Activated naive CD4-positive, alpha-beta T cell treated with anti-CD3 and anti-CD28 coated beads for 36 hours (primary cell): ENCODE measurements at regions of chr6 and their contacts with region 1.

Region 1: GRCh38 chr6:118187568-118188164 is 280.6 kb downstream of the SLC35F1 start:
- DNase-seq: peak; percentile 53
- H3K4me3 Mint-ChIP-seq: peak overlapping the region; percentile 5
- H3K27ac Mint-ChIP-seq: peak overlapping the region; percentile 82
- H3K4me1 Mint-ChIP-seq: peaks cover 32% of the 10 kb centered on the region
- H3K27me3 Mint-ChIP-seq: no peaks in the 10 kb centered on the region

Region 2: DNA sequence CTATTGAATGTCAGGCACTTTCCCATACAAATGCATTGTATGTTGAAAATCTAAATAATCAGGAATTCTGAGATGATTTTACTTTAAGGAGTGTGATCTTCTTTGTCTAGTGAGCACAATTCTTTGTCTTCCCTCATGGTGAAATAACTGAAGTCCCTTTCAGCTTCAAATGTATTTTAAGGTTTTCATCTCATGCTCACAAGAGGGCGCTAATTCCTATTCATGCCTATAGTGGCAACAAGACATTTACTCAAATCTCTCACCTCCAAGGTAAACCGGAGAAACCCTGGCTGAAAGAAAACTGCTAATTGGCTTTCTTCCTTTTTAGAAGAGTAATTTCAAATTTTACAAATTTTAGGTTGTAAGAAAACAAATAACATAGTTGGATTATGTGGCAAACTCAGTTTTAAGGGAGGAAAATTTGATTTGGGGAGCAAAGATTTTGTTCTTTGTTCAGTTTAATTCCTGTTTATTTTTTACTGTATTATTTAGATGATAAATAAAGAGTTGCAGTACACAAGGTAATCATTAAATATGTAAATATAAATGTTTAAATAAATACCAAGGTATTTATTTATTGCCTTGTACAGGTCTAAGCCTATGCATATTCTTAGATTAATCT is 211.5 kb before region 1 on chr6:
- CTCF ChIA-PET with region 1: no interaction called
- intact Hi-C with region 1: loop called (anchors 5 kb)
- DNase-seq: peak; percentile 17
- H3K4me3 Mint-ChIP-seq: no peak overlapping the region
- H3K27ac Mint-ChIP-seq: no peak overlapping the region
- H3K4me1 Mint-ChIP-seq: no peaks in the 10 kb centered on the region
- H3K27me3 Mint-ChIP-seq: peaks cover 8% of the 10 kb centered on the region

Region 3: DNA sequence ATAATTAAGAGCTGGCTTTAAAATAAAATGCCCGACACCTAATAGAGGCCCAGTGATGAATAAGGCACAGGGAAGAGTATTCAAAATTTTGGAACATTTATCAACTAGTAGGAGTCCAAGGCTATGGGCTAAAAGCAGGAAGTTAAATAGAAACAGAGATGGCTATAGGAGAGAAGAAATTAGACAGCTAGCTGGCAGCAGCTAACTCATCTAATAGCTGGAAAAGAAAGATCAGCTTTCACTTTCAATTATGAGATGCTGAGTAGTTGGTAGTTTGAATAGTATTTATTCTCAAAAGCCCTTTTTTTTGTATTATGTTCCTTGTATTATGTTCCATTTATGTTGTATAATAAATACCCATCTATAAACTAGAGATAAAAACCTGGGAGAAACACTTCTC is 64.9 kb before region 1 on chr6:
- CTCF ChIA-PET with region 1: no interaction called
- intact Hi-C with region 1: loop called (anchors 1 kb)
- DNase-seq: no peak
- H3K4me3 Mint-ChIP-seq: no peak overlapping the region
- H3K27ac Mint-ChIP-seq: no peak overlapping the region
- H3K4me1 Mint-ChIP-seq: peaks cover 12% of the 10 kb centered on the region
- H3K27me3 Mint-ChIP-seq: peaks cover 10% of the 10 kb centered on the region

Region 4: GRCh38 chr6:118198746-118199145 is 11.1 kb after region 1 on chr6:
- CTCF ChIA-PET with region 1: no interaction called
- intact Hi-C with region 1: no loop called
- DNase-seq: no peak
- H3K4me3 Mint-ChIP-seq: no peak overlapping the region
- H3K27ac Mint-ChIP-seq: no peak overlapping the region
- H3K4me1 Mint-ChIP-seq: no peaks in the 10 kb centered on the region
- H3K27me3 Mint-ChIP-seq: peaks cover 2% of the 10 kb centered on the region

Region 5: DNA sequence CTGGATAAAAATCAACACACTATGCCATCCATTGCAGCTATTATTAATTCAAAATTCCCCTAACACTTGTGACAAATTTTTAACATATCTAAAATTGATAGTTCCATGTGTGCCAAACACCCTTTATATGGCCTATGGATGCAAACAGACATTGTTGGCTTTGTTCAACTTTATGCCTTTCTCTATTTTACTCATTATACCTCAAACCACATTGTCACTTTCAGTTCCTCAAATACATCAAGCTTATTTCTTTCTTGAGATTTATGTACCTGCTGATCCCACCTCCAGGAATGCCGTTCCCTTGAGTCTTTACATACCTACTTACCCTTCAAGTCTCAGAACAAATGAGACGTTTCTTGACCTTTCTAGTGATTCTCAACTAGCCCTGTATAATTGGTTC is 167.0 kb after region 1 on chr6:
- CTCF ChIA-PET with region 1: no interaction called
- intact Hi-C with region 1: no loop called
- DNase-seq: no peak
- H3K4me3 Mint-ChIP-seq: no peak overlapping the region
- H3K27ac Mint-ChIP-seq: no peak overlapping the region
- H3K4me1 Mint-ChIP-seq: no peaks in the 10 kb centered on the region
- H3K27me3 Mint-ChIP-seq: no peaks in the 10 kb centered on the region

Region 6: DNA sequence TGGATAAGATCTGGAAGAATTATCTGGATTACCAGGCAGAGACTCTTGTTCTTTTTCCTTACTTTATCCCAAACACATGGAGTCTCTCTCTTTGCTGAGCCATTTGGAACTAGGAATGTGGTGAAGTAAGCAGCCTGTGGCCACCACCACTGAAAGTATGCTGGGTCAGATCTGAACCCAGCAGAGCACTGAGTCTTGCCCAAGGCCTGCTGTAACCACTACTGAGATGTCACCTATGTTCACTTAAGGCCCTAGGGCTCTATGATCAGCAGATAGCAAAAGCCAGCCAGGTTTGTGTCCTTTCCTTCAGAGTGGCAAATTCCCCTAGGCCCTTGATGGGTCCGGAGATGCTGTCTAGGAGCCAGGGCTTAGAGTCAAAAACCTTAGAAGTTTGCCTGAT is 257.1 kb after region 1 on chr6:
- CTCF ChIA-PET with region 1: no interaction called
- intact Hi-C with region 1: no loop called
- DNase-seq: no peak
- H3K4me3 Mint-ChIP-seq: no peak overlapping the region
- H3K27ac Mint-ChIP-seq: no peak overlapping the region
- H3K4me1 Mint-ChIP-seq: no peaks in the 10 kb centered on the region
- H3K27me3 Mint-ChIP-seq: no peaks in the 10 kb centered on the region

Region 7: DNA sequence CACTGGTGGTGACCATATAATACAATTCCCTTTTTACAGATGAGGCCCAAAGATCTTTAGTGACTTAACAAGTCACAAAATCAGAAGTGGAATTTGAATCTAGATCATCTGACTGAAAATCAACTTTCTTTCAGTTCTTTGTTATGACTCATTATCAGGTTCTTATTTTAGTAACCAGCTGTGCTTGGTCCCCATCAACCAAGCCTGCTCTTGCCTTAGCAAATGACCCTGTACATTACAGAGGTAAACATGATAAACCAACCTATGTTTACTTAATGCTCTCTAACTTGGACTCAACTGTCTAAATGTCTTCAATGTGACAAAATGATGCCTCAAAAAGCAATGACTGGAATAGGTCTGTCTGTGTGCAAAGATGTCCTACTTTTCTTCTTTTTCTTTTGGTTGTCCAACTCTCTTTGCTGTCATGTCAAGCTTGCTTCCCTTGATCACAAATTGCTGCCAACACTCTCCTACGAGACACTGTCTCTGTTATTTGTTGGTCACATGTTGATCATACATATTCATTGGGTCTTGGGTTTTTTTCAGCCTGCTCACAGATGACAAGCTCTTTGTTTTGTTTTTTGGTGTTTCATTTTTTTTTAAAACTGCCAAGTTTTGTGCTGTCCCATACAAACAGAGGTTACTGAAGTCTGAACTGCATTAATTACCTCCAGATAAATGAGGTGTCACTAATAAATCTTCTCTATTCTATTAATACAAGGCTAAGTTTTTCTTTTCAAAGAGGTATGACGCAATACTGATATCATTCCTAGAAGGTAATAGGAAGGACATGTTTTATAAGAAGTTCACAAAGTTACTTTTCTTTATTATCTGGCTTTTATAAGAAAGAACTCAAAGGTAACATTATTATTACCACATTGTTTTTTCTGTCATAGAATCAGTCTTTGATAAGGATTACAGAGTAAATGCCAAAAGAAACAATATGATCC is 298.2 kb after region 1 on chr6:
- CTCF ChIA-PET with region 1: no interaction called
- intact Hi-C with region 1: loop called (anchors 5 kb)
- DNase-seq: peak; percentile 13
- H3K4me3 Mint-ChIP-seq: no peak overlapping the region
- H3K27ac Mint-ChIP-seq: no peak overlapping the region
- H3K4me1 Mint-ChIP-seq: peaks cover 27% of the 10 kb centered on the region
- H3K27me3 Mint-ChIP-seq: no peaks in the 10 kb centered on the region

Region 8: DNA sequence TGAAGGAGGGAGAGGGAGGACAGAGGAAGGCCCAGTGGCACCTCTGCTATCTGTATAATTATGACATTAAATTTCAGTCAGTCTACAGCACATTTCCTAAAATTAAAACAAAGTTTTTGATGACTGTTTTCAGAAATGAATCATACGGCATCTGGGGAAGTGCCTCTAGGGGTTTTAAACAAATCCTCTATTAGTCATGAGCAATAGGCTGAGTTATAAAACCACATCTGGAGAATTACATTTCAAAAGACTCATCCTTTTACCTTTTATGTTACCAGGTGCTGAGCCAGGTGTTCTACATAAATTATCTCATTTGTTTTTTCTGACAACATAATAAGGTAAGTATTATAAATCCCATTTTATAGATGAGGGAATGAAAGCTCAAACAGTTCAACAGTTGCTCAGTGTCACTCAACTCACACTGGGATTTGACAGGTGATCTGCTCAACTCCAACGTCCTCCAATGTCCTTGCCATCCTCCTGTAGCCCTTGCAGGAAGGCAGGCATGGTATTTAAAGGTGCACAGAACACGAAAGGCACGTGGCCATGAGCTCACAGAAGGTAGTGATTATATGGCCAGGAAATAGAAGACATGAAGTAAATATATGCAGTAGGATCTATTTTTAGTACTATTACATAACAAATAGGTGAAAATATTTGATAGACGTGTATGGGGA is 1346.1 kb after region 1 on chr6:
- CTCF ChIA-PET with region 1: no interaction called
- intact Hi-C with region 1: loop called (anchors 2 kb)
- DNase-seq: peak; percentile 16
- H3K4me3 Mint-ChIP-seq: no peak overlapping the region
- H3K27ac Mint-ChIP-seq: no peak overlapping the region
- H3K4me1 Mint-ChIP-seq: peaks cover 9% of the 10 kb centered on the region
- H3K27me3 Mint-ChIP-seq: peaks cover 6% of the 10 kb centered on the region